Calu3 (cell line): ENCODE measurements at regions of chr13 and their contacts with region 1.

Region 1: GRCh38 chr13:29508130-29508875 is 87.2 kb downstream of the SLC7A1 start:
- DNase-seq: peak; percentile 75
- H3K4me3 Mint-ChIP-seq: no peak overlapping the region
- H3K27ac Mint-ChIP-seq: no peak overlapping the region
- H3K4me1 Mint-ChIP-seq: no peaks in the 10 kb centered on the region
- H3K27me3 Mint-ChIP-seq: no peaks in the 10 kb centered on the region
- CTCF ChIP-seq: peak; percentile 79

Region 2: GRCh38 chr13:29707876-29708543 is 199.7 kb after region 1 on chr13:
- CTCF ChIA-PET with region 1: interaction called, 7 read pairs
- intact Hi-C with region 1: loop called (anchors 2 kb)
- DNase-seq: peak; percentile 63
- H3K4me3 Mint-ChIP-seq: no peak overlapping the region
- H3K27ac Mint-ChIP-seq: no peak overlapping the region
- H3K4me1 Mint-ChIP-seq: no peaks in the 10 kb centered on the region
- H3K27me3 Mint-ChIP-seq: peaks cover 44% of the 10 kb centered on the region
- CTCF ChIP-seq: peak; percentile 40

Region 3: GRCh38 chr13:30114571-30115256 is 606.4 kb after region 1 on chr13:
- CTCF ChIA-PET with region 1: no interaction called
- intact Hi-C with region 1: loop called (anchors 5 kb)
- DNase-seq: peak; percentile 92
- H3K4me3 Mint-ChIP-seq: peak overlapping the region; percentile 73
- H3K27ac Mint-ChIP-seq: peak overlapping the region; percentile 66
- H3K4me1 Mint-ChIP-seq: peaks cover 27% of the 10 kb centered on the region
- H3K27me3 Mint-ChIP-seq: no peaks in the 10 kb centered on the region
- CTCF ChIP-seq: peak; percentile 84